Activated T-helper 1 cell treated with anti-CD3 and anti-CD28 coated beads, Interleukin-12 subunit alpha, Interleukin-12 subunit beta, Interleukin-2, Interleukin-4 antibody, amounts not matched to agents 30 ng/mL and 10 ng/mL and 1 ng/mL, durations not matched to agents 14 hours and 24 hours and 36 hours (primary cell): ENCODE measurements at regions of chr20 and their contacts with region 1.

Region 1: DNA sequence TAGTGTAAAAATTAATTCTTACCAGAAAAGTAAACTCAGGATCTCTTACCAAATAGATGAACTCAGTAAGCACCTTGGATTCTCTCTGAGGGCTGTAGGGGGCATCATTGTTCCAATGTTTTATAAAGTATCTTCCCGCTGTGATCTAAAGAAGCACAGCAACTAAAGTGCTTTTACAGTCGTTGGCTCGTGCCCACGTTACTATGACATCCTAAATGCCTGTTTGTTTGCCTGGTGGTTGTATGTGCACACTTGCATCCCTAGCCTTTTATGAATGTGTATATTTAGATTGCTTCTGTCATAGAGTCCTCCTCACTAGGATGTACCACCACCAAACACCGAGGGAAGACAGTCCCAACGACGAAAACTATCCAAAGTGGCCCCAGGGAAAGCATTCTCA is 34.5 kb downstream of the SLX4IP start:
- DNase-seq: peak; percentile 2
- H3K4me3 Mint-ChIP-seq: no peak overlapping the region
- H3K27ac Mint-ChIP-seq: no peak overlapping the region
- H3K4me1 Mint-ChIP-seq: peaks cover 19% of the 10 kb centered on the region
- H3K27me3 Mint-ChIP-seq: no peaks in the 10 kb centered on the region

Region 2: DNA sequence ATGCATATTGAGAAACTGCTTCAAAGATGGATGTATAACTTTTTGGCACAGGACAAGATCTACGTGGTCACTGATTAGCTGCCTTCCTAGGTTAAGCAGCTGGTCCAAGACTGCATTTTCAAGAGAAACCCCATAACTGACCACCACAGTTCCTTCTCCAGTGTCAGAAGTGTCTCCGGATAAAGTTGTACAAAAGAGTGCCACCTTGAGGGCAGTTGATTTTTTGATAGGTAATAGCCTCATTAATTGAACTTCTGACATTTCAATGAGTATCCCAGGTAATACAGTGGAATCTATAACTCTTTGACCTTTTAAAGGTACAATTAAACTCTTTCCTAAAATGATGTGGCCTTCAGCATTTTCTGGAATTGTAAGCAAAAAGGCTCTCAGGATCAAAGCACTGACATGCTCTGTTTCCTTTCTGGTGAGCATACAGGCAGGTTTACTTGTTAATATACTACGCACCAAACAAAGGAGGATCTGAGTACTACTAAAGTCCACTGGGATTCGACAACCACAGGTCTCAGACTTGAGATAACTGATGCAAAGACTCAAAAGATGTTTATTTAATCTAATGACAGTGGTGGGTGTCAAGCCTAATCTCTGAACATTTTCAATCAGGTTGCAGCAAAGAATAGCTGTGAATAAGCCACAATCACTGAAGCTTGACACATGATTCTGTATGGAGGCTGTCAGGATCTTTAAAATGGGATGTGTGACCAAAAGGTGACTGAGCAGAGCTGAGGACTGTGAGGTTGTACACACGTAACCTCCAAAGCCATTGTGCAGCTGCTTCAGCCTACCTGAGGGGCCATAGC is 56.8 kb before region 1 on chr20:
- intact Hi-C with region 1: no loop called
- DNase-seq: no peak
- H3K4me3 Mint-ChIP-seq: no peak overlapping the region
- H3K27ac Mint-ChIP-seq: no peak overlapping the region
- H3K4me1 Mint-ChIP-seq: no peaks in the 10 kb centered on the region
- H3K27me3 Mint-ChIP-seq: no peaks in the 10 kb centered on the region

Region 3: DNA sequence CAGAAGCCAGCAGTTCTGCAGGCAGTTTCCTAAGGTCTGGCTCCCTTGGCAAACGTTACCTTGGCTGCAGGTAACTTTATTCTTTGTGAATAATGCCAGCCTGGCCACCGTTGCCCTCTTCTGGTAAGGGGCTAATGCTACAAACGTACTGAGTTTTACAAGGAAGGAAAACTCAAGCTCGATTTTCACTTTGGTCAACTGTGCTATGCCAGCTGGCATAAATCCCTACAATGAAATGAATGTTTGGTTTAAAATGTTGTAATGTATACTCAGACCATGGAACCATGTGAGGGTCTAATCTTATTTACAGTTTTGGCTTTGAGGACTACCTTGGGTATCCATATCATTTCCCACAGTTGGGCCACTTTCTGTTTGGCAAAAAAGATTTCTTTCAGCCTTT is 66.9 kb after region 1 on chr20:
- intact Hi-C with region 1: loop called (anchors 1 kb)
- DNase-seq: no peak
- H3K4me3 Mint-ChIP-seq: no peak overlapping the region
- H3K27ac Mint-ChIP-seq: no peak overlapping the region
- H3K4me1 Mint-ChIP-seq: peaks cover 15% of the 10 kb centered on the region
- H3K27me3 Mint-ChIP-seq: no peaks in the 10 kb centered on the region

Region 4: GRCh38 chr20:11544029-11544678 is 1074.6 kb after region 1 on chr20:
- intact Hi-C with region 1: loop called (anchors 10 kb)
- DNase-seq: peak; percentile 6
- H3K4me3 Mint-ChIP-seq: no peak overlapping the region
- H3K27ac Mint-ChIP-seq: no peak overlapping the region
- H3K4me1 Mint-ChIP-seq: no peaks in the 10 kb centered on the region
- H3K27me3 Mint-ChIP-seq: no peaks in the 10 kb centered on the region